ENCODE measurements at regions of chr15 and their contacts with region 1.

Region 1: DNA sequence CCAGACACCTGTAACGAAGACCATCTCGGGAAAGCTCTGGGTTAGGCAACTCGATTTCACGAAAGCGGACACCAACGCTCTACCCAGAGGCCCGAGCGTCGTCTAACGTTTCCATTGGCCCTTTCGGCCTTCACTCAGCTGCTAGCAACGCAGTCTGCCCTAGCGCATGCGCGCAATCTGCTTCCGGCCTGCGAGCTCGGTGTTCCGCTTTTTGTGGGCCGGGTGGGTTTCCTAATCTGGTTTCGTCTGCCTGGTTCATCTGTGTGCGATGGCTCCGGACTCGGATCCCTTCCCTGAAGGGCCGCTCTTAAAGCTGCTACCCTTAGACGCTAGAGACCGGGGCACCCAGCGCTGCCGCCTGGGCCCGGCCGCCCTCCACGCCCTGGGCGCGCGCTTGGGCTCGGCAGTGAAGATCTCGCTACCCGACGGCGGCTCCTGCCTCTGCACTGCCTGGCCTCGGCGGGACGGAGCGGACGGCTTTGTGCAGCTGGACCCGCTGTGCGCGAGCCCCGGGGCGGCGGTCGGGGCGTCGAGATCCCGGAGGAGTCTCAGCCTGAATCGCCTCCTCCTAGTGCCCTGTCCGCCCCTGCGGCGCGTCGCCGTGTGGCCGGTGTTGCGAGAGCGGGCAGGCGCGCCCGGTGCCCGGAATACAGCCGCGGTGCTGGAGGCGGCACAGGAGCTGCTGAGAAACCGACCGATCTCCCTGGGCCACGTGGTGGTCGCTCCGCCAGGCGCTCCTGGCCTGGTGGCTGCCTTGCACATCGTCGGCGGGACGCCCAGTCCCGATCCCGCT is 24.0 kb upstream of the GATM start:
- DNase-seq: peak; percentile 98
- H3K4me3 Mint-ChIP-seq: peak overlapping the region; percentile 97
- H3K27ac Mint-ChIP-seq: peak overlapping the region; percentile 84
- H3K4me1 Mint-ChIP-seq: peaks cover 37% of the 10 kb centered on the region
- H3K27me3 Mint-ChIP-seq: no peaks in the 10 kb centered on the region

Region 2: GRCh38 chr15:44999105-44999504 is 403.3 kb before region 1 on chr15:
- CTCF ChIA-PET with region 1: no interaction called
- POLR2A ChIA-PET with region 1: no interaction called
- DNase-seq: no peak
- H3K4me3 Mint-ChIP-seq: no peak overlapping the region
- H3K27ac Mint-ChIP-seq: no peak overlapping the region
- H3K4me1 Mint-ChIP-seq: no peaks in the 10 kb centered on the region
- H3K27me3 Mint-ChIP-seq: peaks cover 26% of the 10 kb centered on the region

Region 3: GRCh38 chr15:45198337-45199135 is 203.8 kb before region 1 on chr15:
- CTCF ChIA-PET with region 1: interaction called, 60 read pairs
- POLR2A ChIA-PET with region 1: interaction called, 51 read pairs
- DNase-seq: peak; percentile 96
- H3K4me3 Mint-ChIP-seq: no peak overlapping the region
- H3K27ac Mint-ChIP-seq: no peak overlapping the region
- H3K4me1 Mint-ChIP-seq: peaks cover 19% of the 10 kb centered on the region
- H3K27me3 Mint-ChIP-seq: peaks cover 2% of the 10 kb centered on the region

Region 4: GRCh38 chr15:45391746-45392583 is 10.4 kb before region 1 on chr15:
- CTCF ChIA-PET with region 1: interaction called, 14 read pairs
- POLR2A ChIA-PET with region 1: interaction called, 6 read pairs
- DNase-seq: no peak
- H3K4me3 Mint-ChIP-seq: no peak overlapping the region
- H3K27ac Mint-ChIP-seq: no peak overlapping the region
- H3K4me1 Mint-ChIP-seq: peaks cover 4% of the 10 kb centered on the region
- H3K27me3 Mint-ChIP-seq: peaks cover 25% of the 10 kb centered on the region

Region 5: GRCh38 chr15:45429974-45430792 is 27.8 kb after region 1 on chr15:
- CTCF ChIA-PET with region 1: interaction called, 13 read pairs
- POLR2A ChIA-PET with region 1: interaction called, 5 read pairs
- DNase-seq: peak; percentile 86
- H3K4me3 Mint-ChIP-seq: peak overlapping the region; percentile 41
- H3K27ac Mint-ChIP-seq: no peak overlapping the region
- H3K4me1 Mint-ChIP-seq: peaks cover 7% of the 10 kb centered on the region
- H3K27me3 Mint-ChIP-seq: peaks cover 31% of the 10 kb centered on the region

Region 6: DNA sequence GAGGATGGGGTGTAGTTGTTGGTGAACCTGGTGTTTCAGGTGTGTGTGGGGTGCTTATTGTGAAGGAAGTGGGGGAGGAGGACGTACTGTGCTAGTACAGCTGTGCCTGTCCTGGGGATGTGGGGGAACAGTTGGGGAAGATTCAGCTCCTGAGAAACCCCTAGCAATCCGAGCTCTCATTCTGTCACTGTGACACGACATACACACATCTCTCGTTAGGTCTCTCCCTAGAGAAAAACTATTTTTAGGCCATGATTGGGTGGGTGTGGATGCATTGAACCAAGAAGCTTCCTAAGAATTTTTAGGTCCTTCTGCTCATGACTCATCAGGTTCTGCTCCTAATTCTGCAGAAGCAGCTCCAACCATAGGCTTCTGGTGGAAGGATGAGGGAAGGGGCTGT is 65.9 kb after region 1 on chr15:
- CTCF ChIA-PET with region 1: no interaction called
- POLR2A ChIA-PET with region 1: no interaction called
- DNase-seq: no peak
- H3K4me3 Mint-ChIP-seq: no peak overlapping the region
- H3K27ac Mint-ChIP-seq: no peak overlapping the region
- H3K4me1 Mint-ChIP-seq: no peaks in the 10 kb centered on the region
- H3K27me3 Mint-ChIP-seq: peaks cover 15% of the 10 kb centered on the region

Region 7: DNA sequence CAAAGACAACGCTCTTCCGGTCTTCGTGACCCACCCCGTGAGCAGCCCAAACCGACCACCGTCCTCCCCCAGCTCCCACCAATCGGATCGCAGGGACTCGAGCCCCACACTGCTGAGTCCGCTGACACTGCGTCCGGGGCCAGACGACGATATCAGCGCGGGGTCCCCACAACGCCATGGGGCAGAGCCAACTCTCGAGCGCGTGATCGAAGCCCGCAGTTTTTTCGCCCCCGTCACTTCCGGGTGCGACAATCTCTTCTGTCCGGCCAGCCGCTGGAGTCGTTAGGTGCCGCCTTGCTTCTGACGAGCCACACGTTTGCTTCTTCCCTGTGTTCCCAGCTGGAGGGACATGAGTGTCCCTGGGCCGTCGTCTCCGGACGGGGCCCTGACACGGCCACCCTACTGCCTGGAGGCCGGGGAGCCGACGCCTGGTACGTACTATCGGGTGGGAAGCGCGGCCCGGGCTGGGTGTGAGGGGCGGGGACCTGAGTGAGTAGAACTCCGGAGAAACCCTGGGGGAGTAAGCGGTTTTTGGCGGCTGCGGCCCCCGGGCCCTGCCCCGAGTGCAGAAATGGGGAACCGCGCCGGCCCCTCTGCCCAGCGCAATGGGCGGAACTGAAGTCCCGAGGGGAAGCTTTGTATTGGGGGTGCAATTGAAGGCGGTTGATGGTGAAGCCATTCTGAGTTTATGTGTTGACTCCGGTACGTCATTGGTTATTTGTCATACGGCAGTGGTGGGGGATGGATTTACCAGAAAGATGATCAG is 184.9 kb after region 1 on chr15 and contains the start of gene BLOC1S6:
- CTCF ChIA-PET with region 1: interaction called, 3 read pairs
- POLR2A ChIA-PET with region 1: interaction called, 70 read pairs
- DNase-seq: peak; percentile 89
- H3K4me3 Mint-ChIP-seq: peak within 1 kb of the TSS; percentile 97
- H3K27ac Mint-ChIP-seq: peak within 1 kb of the TSS; percentile 97
- H3K4me1 Mint-ChIP-seq: peaks cover 38% of the 10 kb centered on the region
- H3K27me3 Mint-ChIP-seq: no peaks in the 10 kb centered on the region
- total RNA-seq, gene BLOC1S6: 39.3 to 43.1 TPM